GM12878 (cell line): ENCODE measurements at regions of chr2 and their contacts with region 1.

Region 1: GRCh38 chr2:36663851-36664695 is 32.4 kb upstream of the VIT start:
- DNase-seq: no peak
- ATAC-seq: peak; percentile 94
- H3K4me3 ChIP-seq: no peak overlapping the region
- H3K27ac ChIP-seq: no peak overlapping the region
- H3K4me1 ChIP-seq: no peaks in the 10 kb centered on the region
- H3K27me3 ChIP-seq: peaks cover 2 to 4% of the 10 kb centered on the region in 2 experiments; a peak in 2 of 4 replicates
- CTCF ChIP-seq: peak; percentile 58 to 75 (median 74); a peak in 5 of 6 replicates
- EP300 ChIP-seq: no peak
- POLR2A ChIP-seq: no peak
- RAD21 ChIP-seq: peak; percentile 88

Region 2: GRCh38 chr2:35891936-35892335 is 772.1 kb before region 1 on chr2:
- CTCF ChIA-PET with region 1: no interaction called
- POLR2A ChIA-PET with region 1: no interaction called
- RAD21 ChIA-PET with region 1: no interaction called
- SMC1A ChIA-PET with region 1: no interaction called
- in situ Hi-C with region 1: no loop called
- intact Hi-C with region 1: loop called (anchors 10 kb)
- DNase-seq: no peak
- ATAC-seq: 0 out of 3 replicates have a peak, but pooled peaks have one; percentile 28
- H3K4me3 ChIP-seq: no peak overlapping the region
- H3K27ac ChIP-seq: no peak overlapping the region
- H3K4me1 ChIP-seq: no peaks in the 10 kb centered on the region
- H3K27me3 ChIP-seq: no peaks in the 10 kb centered on the region
- CTCF ChIP-seq: no peak
- EP300 ChIP-seq: no peak
- POLR2A ChIP-seq: no peak
- RAD21 ChIP-seq: no peak

Region 3: DNA sequence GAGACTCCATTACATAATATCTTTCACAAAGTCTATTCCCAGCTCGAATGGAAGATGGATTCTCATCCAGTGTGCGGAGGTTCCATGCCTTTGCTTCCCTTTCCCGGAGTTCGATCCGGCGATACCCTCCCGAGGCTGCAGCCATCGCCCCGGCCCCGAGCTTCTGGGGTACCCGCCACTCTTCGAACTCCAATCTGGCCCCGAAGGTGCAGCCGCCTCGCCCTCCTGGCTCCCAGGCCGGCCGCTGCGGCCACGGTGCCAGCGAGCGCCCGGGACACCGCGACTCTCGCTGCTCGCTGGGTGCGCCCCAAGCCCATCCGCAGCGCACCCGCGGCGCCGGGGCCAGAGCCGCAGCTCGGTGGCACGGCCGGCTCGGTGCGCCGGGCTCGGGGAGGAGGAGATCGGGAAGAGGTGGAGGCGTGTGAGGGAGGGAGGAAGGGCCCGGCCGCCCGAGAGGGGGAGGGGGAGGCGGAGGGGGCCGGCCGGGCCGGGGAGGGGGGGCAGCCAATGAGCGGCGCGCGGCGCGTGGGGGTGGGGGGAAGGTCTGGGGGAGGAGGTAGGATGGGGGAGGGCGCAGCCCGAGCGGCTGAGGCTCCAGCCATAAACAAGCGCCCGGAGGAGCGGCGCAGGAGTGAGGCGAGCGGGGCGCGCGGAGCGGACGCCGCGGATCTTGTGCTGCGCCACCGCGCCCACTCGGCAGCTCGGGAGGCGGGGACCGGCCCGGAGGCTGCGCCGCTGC is 308.8 kb before region 1 on chr2 and contains the start of gene CRIM1:
- CTCF ChIA-PET with region 1: interaction called, 44 read pairs
- POLR2A ChIA-PET with region 1: interaction called, 3 read pairs
- RAD21 ChIA-PET with region 1: interaction called, 23 read pairs
- SMC1A ChIA-PET with region 1: interaction called, 16 read pairs
- in situ Hi-C with region 1: loop called (anchors 5 kb)
- intact Hi-C with region 1: loop called (anchors 1 kb)
- DNase-seq: no peak
- ATAC-seq: peak; percentile 45
- H3K4me3 ChIP-seq: peak within 1 kb of the TSS; percentile 49; the same call in 1 of the 2 replicates
- H3K27ac ChIP-seq: no peak within 1 kb of the TSS
- H3K4me1 ChIP-seq: peaks cover 9% of the 10 kb centered on the region
- H3K27me3 ChIP-seq: peaks cover 1 to 7% of the 10 kb centered on the region in 2 experiments; a peak in 3 of 4 replicates
- CTCF ChIP-seq: no peak
- EP300 ChIP-seq: no peak
- POLR2A ChIP-seq: 0 out of 2 replicates have a peak, but pooled peaks have one; percentile 34
- RAD21 ChIP-seq: no peak
- polyA plus RNA-seq, gene CRIM1: 2.1 to 2.4 TPM

Region 4: GRCh38 chr2:36387258-36387916 is 276.7 kb before region 1 on chr2:
- CTCF ChIA-PET with region 1: no interaction called
- POLR2A ChIA-PET with region 1: no interaction called
- RAD21 ChIA-PET with region 1: no interaction called
- SMC1A ChIA-PET with region 1: no interaction called
- in situ Hi-C with region 1: no loop called
- intact Hi-C with region 1: no loop called
- DNase-seq: no peak
- ATAC-seq: no peak
- H3K4me3 ChIP-seq: no peak overlapping the region
- H3K27ac ChIP-seq: no peak overlapping the region
- H3K4me1 ChIP-seq: no peaks in the 10 kb centered on the region
- H3K27me3 ChIP-seq: no peaks in the 10 kb centered on the region
- CTCF ChIP-seq: no peak
- EP300 ChIP-seq: no peak
- POLR2A ChIP-seq: no peak
- RAD21 ChIP-seq: no peak

Region 5: GRCh38 chr2:36507408-36507812 is 156.7 kb before region 1 on chr2:
- CTCF ChIA-PET with region 1: interaction called, 3 read pairs
- POLR2A ChIA-PET with region 1: no interaction called
- RAD21 ChIA-PET with region 1: interaction called, 3 read pairs
- SMC1A ChIA-PET with region 1: no interaction called
- in situ Hi-C with region 1: no loop called
- intact Hi-C with region 1: loop called (anchors 5 kb)
- DNase-seq: no peak
- ATAC-seq: peak; percentile 97
- H3K4me3 ChIP-seq: no peak overlapping the region
- H3K27ac ChIP-seq: no peak overlapping the region
- H3K4me1 ChIP-seq: no peaks in the 10 kb centered on the region
- H3K27me3 ChIP-seq: no peaks in the 10 kb centered on the region
- CTCF ChIP-seq: peak; percentile 80 to 81 (median 81)
- EP300 ChIP-seq: no peak
- POLR2A ChIP-seq: no peak
- RAD21 ChIP-seq: peak; percentile 95

Region 6: DNA sequence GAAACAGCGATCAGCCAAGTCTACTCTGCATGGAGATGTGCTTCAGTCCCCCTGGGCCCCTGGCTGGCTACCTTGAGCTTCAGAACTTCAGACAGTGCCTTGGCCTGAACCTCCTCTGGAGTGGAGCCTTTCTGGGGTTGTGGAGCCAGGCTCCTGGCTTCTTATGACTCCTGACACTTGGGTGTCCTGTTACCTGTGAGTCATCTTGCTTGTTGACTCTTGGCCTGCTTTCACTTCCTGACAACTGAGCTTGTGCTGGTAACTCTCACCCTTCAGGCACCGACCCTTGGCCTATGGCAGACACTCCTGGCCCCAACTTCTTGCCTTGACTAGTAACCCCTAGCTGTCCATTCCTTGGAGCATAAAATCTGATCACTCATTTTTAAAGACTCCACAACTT is 14.0 kb before region 1 on chr2:
- CTCF ChIA-PET with region 1: interaction called, 11 read pairs
- POLR2A ChIA-PET with region 1: no interaction called
- RAD21 ChIA-PET with region 1: interaction called, 8 read pairs
- SMC1A ChIA-PET with region 1: interaction called, 3 read pairs
- in situ Hi-C with region 1: no loop called
- intact Hi-C with region 1: no loop called
- DNase-seq: no peak
- ATAC-seq: peak; percentile 88
- H3K4me3 ChIP-seq: no peak overlapping the region
- H3K27ac ChIP-seq: no peak overlapping the region
- H3K4me1 ChIP-seq: no peaks in the 10 kb centered on the region
- H3K27me3 ChIP-seq: no peaks in the 10 kb centered on the region
- CTCF ChIP-seq: no peak
- EP300 ChIP-seq: no peak
- POLR2A ChIP-seq: no peak
- RAD21 ChIP-seq: no peak